HepG2 (cell line): ENCODE measurements at regions of chr6 and their contacts with region 1.

Region 1: GRCh38 chr6:26223650-26224546 is 136.7 kb downstream of the HFE start:
- DNase-seq: peak; percentile 92
- ATAC-seq: peak; percentile 93
- H3K4me3 ChIP-seq: peak overlapping the region; percentile 49 to 70 (median 69)
- H3K27ac ChIP-seq: peak overlapping the region; percentile 94
- H3K4me1 ChIP-seq: peaks cover 33% of the 10 kb centered on the region
- H3K27me3 ChIP-seq: no peaks in the 10 kb centered on the region; a peak in 1 of 5 replicates
- CTCF ChIP-seq: no peak
- EP300 ChIP-seq: no peak
- POLR2A ChIP-seq: peak; percentile 50 to 56; a peak in 2 of 4 replicates
- RAD21 ChIP-seq: no peak

Region 2: DNA sequence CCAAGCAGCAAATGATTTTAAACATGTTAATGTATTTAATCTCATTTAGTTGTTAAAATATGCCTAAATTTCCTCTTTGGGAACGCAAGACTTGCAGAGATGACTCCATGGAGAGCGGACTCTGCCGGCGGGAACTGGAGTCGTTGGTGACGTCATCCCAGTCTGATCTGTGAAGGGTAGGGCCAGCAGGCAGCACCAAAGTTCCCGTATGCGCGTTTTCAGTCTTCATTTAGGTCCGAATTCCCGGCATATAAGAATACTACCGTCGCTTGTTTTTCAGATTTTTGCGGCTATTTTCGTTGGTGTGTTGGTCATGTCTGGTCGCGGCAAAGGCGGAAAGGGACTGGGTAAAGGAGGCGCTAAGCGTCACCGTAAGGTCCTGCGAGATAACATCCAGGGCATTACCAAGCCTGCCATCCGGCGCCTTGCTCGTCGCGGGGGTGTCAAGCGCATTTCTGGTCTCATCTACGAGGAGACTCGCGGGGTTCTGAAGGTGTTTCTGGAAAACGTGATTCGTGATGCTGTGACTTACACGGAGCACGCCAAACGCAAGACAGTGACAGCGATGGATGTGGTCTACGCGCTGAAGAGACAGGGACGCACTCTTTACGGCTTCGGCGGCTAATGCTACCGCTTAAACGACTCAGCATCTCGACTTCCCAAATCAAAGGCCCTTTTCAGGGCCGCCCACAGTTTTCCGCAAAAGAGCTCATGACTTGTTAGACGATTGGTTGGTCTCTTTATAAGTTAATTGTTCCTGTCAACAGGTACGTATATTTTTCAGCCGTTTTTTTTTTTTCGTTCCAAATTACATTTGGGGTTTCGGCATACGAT is 19.3 kb before region 1 on chr6:
- CTCF ChIA-PET with region 1: no interaction called
- POLR2A ChIA-PET with region 1: interaction called, 12 read pairs
- in situ Hi-C with region 1: no loop called
- intact Hi-C with region 1: no loop called
- DNase-seq: peak; percentile 98
- ATAC-seq: peak; percentile 75
- H3K4me3 ChIP-seq: peak overlapping the region; percentile 62 to 95 (median 77)
- H3K27ac ChIP-seq: peak overlapping the region; percentile 87
- H3K4me1 ChIP-seq: peaks cover 36% of the 10 kb centered on the region
- H3K27me3 ChIP-seq: no peaks in the 10 kb centered on the region; a peak in 1 of 5 replicates
- CTCF ChIP-seq: peak; percentile 53
- EP300 ChIP-seq: peak in 1 of 2 experiments; percentile 89; a peak in 3 of 4 replicates
- POLR2A ChIP-seq: peak; percentile 98 to 99
- RAD21 ChIP-seq: no peak; the same call in 1 of the 2 replicates

Region 3: GRCh38 chr6:26234421-26235296 is 10.8 kb after region 1 on chr6:
- CTCF ChIA-PET with region 1: no interaction called
- POLR2A ChIA-PET with region 1: interaction called, 17 read pairs
- in situ Hi-C with region 1: no loop called
- intact Hi-C with region 1: no loop called
- DNase-seq: no peak
- ATAC-seq: peak; percentile 90
- H3K4me3 ChIP-seq: peak overlapping the region; percentile 49 to 73 (median 60)
- H3K27ac ChIP-seq: no peak overlapping the region
- H3K4me1 ChIP-seq: peaks cover 25% of the 10 kb centered on the region; the same call in 1 of the 2 replicates
- H3K27me3 ChIP-seq: peaks cover 0 to 28% of the 10 kb centered on the region in 2 experiments; a peak in 3 of 5 replicates
- CTCF ChIP-seq: no peak
- EP300 ChIP-seq: no peak
- POLR2A ChIP-seq: no peak
- RAD21 ChIP-seq: no peak

Region 4: DNA sequence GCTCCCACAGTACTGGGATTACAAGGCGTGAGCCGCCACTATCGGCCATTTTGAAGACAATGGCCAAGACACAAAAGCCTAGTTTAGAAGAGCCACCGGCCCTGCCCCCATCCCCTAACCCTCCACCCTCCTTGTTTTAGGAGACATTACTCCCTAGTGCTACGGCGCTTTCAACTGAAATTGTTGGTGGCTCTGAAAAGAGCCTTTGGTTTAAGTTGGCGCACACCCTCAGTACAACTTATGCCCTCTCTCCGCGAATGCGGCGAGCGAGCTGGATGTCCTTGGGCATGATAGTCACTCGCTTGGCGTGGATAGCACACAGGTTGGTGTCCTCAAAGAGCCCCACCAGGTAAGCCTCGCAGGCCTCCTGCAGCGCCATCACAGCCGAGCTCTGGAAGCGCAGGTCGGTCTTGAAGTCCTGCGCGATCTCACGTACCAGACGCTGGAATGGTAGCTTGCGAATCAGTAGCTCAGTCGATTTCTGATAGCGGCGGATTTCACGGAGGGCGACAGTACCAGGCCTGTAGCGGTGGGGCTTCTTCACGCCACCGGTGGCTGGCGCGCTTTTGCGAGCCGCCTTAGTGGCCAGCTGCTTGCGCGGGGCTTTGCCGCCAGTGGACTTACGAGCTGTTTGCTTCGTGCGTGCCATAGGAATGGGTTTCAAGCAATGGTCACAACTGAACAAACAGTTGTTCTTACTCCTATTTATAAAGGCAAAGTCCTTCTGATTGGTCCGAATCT is 26.2 kb after region 1 on chr6:
- CTCF ChIA-PET with region 1: no interaction called
- POLR2A ChIA-PET with region 1: interaction called, 16 read pairs
- in situ Hi-C with region 1: no loop called
- intact Hi-C with region 1: no loop called
- DNase-seq: peak; percentile 58
- ATAC-seq: peak; percentile 84
- H3K4me3 ChIP-seq: peak overlapping the region; percentile 55 to 80 (median 60)
- H3K27ac ChIP-seq: peak overlapping the region; percentile 52
- H3K4me1 ChIP-seq: peaks cover 40% of the 10 kb centered on the region
- H3K27me3 ChIP-seq: peaks cover 2 to 37% of the 10 kb centered on the region in 2 experiments; a peak in 3 of 5 replicates
- CTCF ChIP-seq: peak; percentile 72
- EP300 ChIP-seq: 0 out of 4 replicates have a peak, but pooled peaks of 1 of the 2 experiments have one; percentile 22
- POLR2A ChIP-seq: peak in 1 of 2 experiments; percentile 72; a peak in 2 of 4 replicates
- RAD21 ChIP-seq: no peak

Region 5: DNA sequence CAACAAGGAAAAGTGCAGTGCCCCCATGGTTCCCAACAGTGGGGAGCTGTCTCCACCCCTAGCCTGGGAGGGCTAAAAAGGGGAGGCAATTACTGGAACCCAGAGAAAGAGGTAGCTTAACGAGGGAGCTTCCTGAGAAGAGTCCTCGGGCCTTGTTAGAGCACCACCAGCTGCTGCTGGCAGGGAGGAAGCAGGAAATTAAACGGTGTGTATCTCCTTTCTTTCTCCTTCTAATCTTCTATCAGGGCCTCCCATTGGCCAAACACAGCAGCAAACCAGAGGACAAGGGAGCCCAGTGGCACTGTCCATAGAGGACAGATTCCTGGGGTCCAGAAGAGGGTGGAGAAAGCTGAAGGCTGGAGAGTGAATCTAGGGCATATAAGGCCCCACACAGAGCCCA is 151.4 kb after region 1 on chr6:
- CTCF ChIA-PET with region 1: no interaction called
- POLR2A ChIA-PET with region 1: no interaction called
- in situ Hi-C with region 1: no loop called
- intact Hi-C with region 1: no loop called
- DNase-seq: no peak
- ATAC-seq: no peak
- H3K4me3 ChIP-seq: no peak overlapping the region
- H3K27ac ChIP-seq: no peak overlapping the region
- H3K4me1 ChIP-seq: no peaks in the 10 kb centered on the region
- H3K27me3 ChIP-seq: no peaks in the 10 kb centered on the region
- CTCF ChIP-seq: no peak
- EP300 ChIP-seq: no peak
- POLR2A ChIP-seq: no peak
- RAD21 ChIP-seq: no peak